Ascending aorta (tissue), 2 donors: ENCODE measurements at regions of chr14 and their contacts with region 1.

Region 1: DNA sequence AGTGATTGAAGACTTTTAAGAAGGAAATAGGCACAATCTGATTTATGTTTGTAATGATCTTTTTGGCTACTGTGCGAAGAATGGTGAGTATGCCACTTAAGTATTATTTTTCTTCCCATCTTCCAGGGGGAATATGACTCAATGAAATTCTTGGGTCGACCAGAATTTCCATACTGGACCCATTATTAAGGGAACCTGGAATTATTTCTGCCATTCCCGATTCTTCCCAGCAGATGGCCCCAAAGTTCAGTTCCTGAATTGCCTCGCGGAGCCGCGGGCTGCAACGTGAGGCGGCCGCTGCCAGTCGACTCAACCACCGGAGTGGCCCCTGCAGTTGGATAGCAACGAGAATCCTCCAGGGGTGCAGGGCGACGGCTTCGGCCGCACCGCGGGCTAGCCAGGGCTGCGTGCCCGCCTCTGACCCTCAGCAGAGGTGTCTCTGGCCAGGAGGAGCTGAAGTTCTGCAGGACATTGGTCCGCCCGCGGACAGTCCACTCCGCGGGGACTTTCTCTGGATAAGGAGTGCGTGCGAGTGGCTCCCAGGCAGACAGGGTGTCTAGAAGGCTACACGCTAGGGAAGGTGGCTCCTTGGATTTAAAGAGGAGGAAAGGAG is 628 bp upstream of the TSHR start:
- DNase-seq: peak; percentile 30 to 86
- H3K4me3 ChIP-seq: peak overlapping the region; percentile 63 to 67
- H3K27ac ChIP-seq: no peak overlapping the region
- H3K4me1 ChIP-seq: peaks cover 0 to 6% of the 10 kb centered on the region in 2 donors
- H3K27me3 ChIP-seq: no peaks in the 10 kb centered on the region
- CTCF ChIP-seq: peak; percentile 69 to 87 (median 76)

Region 2: GRCh38 chr14:80987235-80988032 is 32.6 kb after region 1 on chr14:
- intact Hi-C with region 1: loop called (anchors 1 kb)
- DNase-seq: peak in 1 of 2 donors; percentile 80
- H3K4me3 ChIP-seq: no peak overlapping the region
- H3K27ac ChIP-seq: no peak overlapping the region
- H3K4me1 ChIP-seq: peaks cover 0 to under 1% of the 10 kb centered on the region in 2 donors
- H3K27me3 ChIP-seq: no peaks in the 10 kb centered on the region
- CTCF ChIP-seq: peak; percentile 73 to 90 (median 85)

Region 3: GRCh38 chr14:81004575-81004974 is 49.8 kb after region 1 on chr14:
- intact Hi-C with region 1: no loop called
- DNase-seq: no peak
- H3K4me3 ChIP-seq: no peak overlapping the region
- H3K27ac ChIP-seq: no peak overlapping the region
- H3K4me1 ChIP-seq: no peaks in the 10 kb centered on the region
- H3K27me3 ChIP-seq: no peaks in the 10 kb centered on the region
- CTCF ChIP-seq: no peak

Region 4: GRCh38 chr14:81170104-81170828 is 215.5 kb after region 1 on chr14:
- intact Hi-C with region 1: loop called (anchors 2 kb)
- DNase-seq: peak; percentile 82 to 95
- H3K4me3 ChIP-seq: peak overlapping the region; percentile 73 to 78
- H3K27ac ChIP-seq: peak overlapping the region; percentile 85 to 92
- H3K4me1 ChIP-seq: peaks cover 0 to 10% of the 10 kb centered on the region in 2 donors
- H3K27me3 ChIP-seq: no peaks in the 10 kb centered on the region
- CTCF ChIP-seq: peak; percentile 56 to 90 (median 87)